ENCODE measurements at regions of chr3 and their contacts with region 1.

Region 1: DNA sequence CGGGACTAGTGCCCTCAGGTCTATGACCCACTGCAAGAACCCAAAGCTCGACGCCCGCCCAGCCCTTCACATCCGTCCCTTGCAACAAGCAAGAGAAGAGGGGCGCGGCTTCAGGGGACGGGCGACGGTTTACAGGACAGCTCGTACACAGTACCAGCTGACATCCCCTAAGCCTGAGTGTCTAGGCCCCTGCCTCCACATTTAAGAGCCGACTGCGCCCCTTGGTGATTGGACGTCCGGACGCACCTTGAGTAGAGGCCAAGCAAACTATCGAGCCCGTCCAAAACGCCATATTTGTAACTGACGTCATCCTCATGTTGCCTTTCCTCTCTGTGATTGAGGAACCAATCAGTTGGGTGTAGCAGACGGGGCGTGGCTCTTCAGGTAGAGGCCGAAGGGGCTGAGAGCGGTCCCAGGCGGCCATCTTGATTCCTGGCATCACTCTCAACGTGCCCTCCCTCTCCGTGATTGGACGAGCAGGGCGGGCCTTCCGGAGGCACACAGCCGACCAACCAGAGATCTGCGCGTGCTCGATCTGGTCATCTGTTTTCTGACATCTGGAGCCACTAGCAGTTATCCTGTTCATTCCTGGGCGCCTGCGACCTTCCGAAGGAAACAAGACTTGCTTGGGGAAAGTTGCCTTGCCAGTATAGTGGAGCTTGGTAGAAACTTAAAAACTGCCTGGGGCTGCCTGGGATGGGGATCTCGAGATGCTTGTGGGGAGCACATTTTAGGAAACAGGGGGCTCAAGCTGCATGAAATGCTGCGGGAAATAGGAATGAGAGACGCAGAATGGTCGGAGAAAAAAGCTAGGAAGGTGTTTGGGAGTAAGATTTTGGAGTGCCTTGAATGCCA is 4.0 kb upstream of the RPL14 start:
- DNase-seq: peak; percentile 99
- ATAC-seq: peak; percentile 93
- H3K4me3 Mint-ChIP-seq: peak overlapping the region; percentile 89
- H3K27ac Mint-ChIP-seq: peak overlapping the region; percentile 98
- H3K4me1 Mint-ChIP-seq: peaks cover 46% of the 10 kb centered on the region
- H3K27me3 Mint-ChIP-seq: no peaks in the 10 kb centered on the region

Region 2: DNA sequence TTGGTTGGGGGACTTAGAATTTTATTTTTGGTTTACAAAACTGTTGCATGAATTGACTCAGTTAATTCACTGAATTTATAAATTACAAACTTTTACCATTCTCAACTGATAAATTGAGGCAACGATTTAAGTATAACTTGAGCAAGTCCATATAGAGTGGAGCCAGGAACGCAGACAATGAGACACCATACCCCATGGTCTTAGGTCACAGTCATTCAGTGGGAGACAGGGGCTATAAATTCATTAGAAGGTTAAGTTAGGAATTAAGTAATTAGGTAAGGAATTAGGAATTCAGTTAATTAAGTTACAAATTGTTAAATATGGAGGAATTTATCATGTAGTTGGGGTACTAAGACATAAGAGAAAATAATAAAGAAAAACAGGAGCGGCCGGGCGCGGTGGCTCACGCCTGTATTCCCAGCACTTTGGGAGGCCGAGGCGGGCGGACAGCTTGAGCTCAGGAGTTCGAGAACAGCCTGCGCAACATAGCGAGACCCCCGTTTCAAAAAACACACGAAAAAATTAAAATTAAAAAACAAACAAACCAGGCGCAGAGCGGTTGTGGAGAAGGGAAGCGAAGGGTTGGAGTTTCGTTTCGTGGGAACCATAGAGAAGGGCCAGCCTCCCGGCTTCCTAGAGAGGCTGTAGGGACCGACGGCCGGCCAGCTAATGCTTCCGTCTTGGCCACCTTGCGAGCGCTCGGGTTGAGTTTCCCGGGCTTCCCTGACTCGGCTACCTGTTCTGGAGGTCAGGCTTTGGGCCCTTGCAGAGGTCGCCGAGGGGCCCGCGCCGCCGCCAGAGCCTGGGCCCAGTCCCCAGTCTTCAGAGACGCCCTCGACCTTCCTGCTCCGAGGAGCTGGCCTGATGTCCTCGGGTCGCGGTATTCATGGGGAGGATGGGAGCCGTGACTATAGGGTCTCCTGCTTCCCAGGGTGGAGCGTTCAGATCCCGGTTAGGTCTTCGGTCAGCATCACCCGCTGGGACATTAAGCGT is 23.7 kb after region 1 on chr3 and contains the start of gene ZNF619:
- CTCF ChIA-PET with region 1: interaction called, 3 read pairs
- POLR2A ChIA-PET with region 1: interaction called, 17 read pairs
- DNase-seq: peak; percentile 66
- ATAC-seq: peak; percentile 88
- H3K4me3 Mint-ChIP-seq: peak within 1 kb of the TSS; percentile 87
- H3K27ac Mint-ChIP-seq: peak within 1 kb of the TSS; percentile 79
- H3K4me1 Mint-ChIP-seq: peaks cover 23% of the 10 kb centered on the region
- H3K27me3 Mint-ChIP-seq: no peaks in the 10 kb centered on the region
- total RNA-seq, gene ZNF619: 6.7 to 8.5 TPM

Region 3: GRCh38 chr3:40580494-40581091 is 127.5 kb after region 1 on chr3:
- CTCF ChIA-PET with region 1: no interaction called
- POLR2A ChIA-PET with region 1: no interaction called
- DNase-seq: peak; percentile 71
- ATAC-seq: peak; percentile 72
- H3K4me3 Mint-ChIP-seq: no peak overlapping the region
- H3K27ac Mint-ChIP-seq: no peak overlapping the region
- H3K4me1 Mint-ChIP-seq: no peaks in the 10 kb centered on the region
- H3K27me3 Mint-ChIP-seq: peaks cover 5% of the 10 kb centered on the region